ENCODE measurements at regions of chr14 and their contacts with region 1.

Region 1: GRCh38 chr14:90383075-90383730 is 13.6 kb upstream of the CALM1 start:
- DNase-seq: peak; percentile 99
- H3K4me3 ChIP-seq: peak overlapping the region; percentile 60
- H3K4me3 Mint-ChIP-seq: no peak overlapping the region
- H3K27ac Mint-ChIP-seq: no peak overlapping the region
- H3K4me1 ChIP-seq: peaks cover 22% of the 10 kb centered on the region
- H3K4me1 Mint-ChIP-seq: peaks cover 7% of the 10 kb centered on the region
- H3K27me3 ChIP-seq: no peaks in the 10 kb centered on the region
- H3K27me3 Mint-ChIP-seq: no peaks in the 10 kb centered on the region
- CTCF ChIP-seq: peak in 1 of 2 experiments; percentile 9

Region 2: GRCh38 chr14:90288651-90289355 is 94.4 kb before region 1 on chr14:
- CTCF ChIA-PET with region 1: interaction called, 14 read pairs
- POLR2A ChIA-PET with region 1: interaction called, 3 read pairs
- intact Hi-C with region 1: loop called (anchors 5 kb)
- DNase-seq: no peak
- H3K4me3 ChIP-seq: no peak overlapping the region
- H3K4me3 Mint-ChIP-seq: no peak overlapping the region
- H3K27ac Mint-ChIP-seq: no peak overlapping the region
- H3K4me1 ChIP-seq: no peaks in the 10 kb centered on the region
- H3K4me1 Mint-ChIP-seq: no peaks in the 10 kb centered on the region
- H3K27me3 ChIP-seq: no peaks in the 10 kb centered on the region
- H3K27me3 Mint-ChIP-seq: no peaks in the 10 kb centered on the region
- CTCF ChIP-seq: no peak

Region 3: GRCh38 chr14:90308561-90308960 is 74.6 kb before region 1 on chr14:
- CTCF ChIA-PET with region 1: no interaction called
- POLR2A ChIA-PET with region 1: interaction called, 11 read pairs
- intact Hi-C with region 1: no loop called
- DNase-seq: no peak
- H3K4me3 ChIP-seq: no peak overlapping the region
- H3K4me3 Mint-ChIP-seq: no peak overlapping the region
- H3K27ac Mint-ChIP-seq: no peak overlapping the region
- H3K4me1 ChIP-seq: no peaks in the 10 kb centered on the region
- H3K4me1 Mint-ChIP-seq: no peaks in the 10 kb centered on the region
- H3K27me3 ChIP-seq: no peaks in the 10 kb centered on the region
- H3K27me3 Mint-ChIP-seq: no peaks in the 10 kb centered on the region
- CTCF ChIP-seq: no peak

Region 4: DNA sequence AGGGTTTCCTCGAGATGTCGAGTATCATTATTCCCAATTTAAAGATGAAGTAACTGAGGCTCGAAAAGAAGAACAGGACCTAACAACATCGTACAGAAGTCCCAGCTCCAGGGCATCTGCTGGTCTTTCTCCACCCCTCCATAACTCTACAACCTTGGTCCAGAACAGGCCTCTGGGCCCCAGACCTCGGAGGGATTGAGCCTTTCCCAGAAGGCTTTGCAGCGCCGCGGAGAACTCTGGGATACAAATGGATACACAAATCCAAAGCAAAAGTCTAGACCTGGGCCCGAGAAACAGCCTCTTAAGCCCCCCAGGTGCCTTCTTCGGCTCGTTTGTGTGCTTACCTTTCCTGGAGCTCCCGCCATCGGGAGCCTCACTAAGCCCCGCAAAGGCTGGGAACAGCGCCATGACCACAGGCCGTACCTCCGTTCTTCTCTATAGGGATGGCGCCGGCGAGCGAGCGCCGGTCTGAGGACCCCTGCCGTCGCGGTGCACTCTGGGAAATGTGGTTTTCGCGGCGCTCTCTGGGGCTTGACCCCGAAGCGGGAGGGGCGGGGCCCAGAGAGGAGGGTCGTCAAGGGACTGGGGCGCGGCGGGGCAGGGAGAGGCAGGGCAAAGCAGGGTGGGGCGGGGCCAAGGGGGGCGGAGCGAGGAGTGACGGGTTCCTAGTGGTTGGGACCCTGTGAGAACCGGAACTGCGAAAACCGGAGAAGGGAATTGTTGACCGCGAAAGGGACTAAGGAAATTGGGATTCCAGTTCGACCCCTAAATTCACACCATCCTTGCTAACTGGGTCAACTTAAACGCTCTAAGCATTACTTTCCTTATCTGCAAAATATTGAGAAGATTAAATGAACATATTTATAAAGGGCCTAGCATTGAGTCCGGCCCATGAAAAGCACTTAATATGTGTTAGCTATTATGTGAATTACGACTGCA is 51.4 kb before region 1 on chr14 and contains the start of gene NRDE2:
- CTCF ChIA-PET with region 1: interaction called, 4 read pairs
- POLR2A ChIA-PET with region 1: interaction called, 6 read pairs
- intact Hi-C with region 1: loop called (anchors 1 kb)
- DNase-seq: peak; percentile 99
- H3K4me3 ChIP-seq: peak within 1 kb of the TSS; percentile 37
- H3K4me3 Mint-ChIP-seq: peak within 1 kb of the TSS; percentile 91
- H3K27ac Mint-ChIP-seq: peak within 1 kb of the TSS; percentile 95
- H3K4me1 ChIP-seq: peaks cover 18% of the 10 kb centered on the region
- H3K4me1 Mint-ChIP-seq: peaks cover 16% of the 10 kb centered on the region
- H3K27me3 ChIP-seq: no peaks in the 10 kb centered on the region
- H3K27me3 Mint-ChIP-seq: no peaks in the 10 kb centered on the region
- CTCF ChIP-seq: no peak
- total RNA-seq, gene NRDE2: 17.1 and 18.0 TPM in 2 replicates

Region 5: DNA sequence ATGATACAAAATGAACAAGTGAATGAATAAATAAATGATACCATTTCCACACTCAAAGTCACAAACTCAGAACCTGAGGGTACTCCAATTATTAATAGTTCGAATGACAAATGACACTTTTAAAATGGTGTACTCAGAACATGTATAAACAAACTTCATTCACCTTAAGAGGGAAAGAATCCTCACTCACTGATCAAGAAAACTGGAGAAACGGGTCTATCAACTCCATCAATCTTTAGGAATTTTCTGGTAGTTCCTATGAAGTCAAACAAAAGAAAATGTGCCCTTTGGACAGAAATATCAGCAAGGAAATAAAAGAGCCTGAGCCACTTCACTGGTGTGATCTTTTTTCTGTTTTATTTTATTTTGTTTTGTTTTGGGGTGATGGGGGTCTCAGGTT is 46.2 kb before region 1 on chr14:
- CTCF ChIA-PET with region 1: interaction called, 4 read pairs
- POLR2A ChIA-PET with region 1: interaction called, 6 read pairs
- intact Hi-C with region 1: loop called (anchors 1 kb)
- DNase-seq: peak in 1 of 2 experiments; percentile 80
- H3K4me3 ChIP-seq: no peak overlapping the region
- H3K4me3 Mint-ChIP-seq: peak overlapping the region; percentile 62
- H3K27ac Mint-ChIP-seq: peak overlapping the region; percentile 87
- H3K4me1 ChIP-seq: peaks cover 31% of the 10 kb centered on the region
- H3K4me1 Mint-ChIP-seq: peaks cover 22% of the 10 kb centered on the region
- H3K27me3 ChIP-seq: no peaks in the 10 kb centered on the region
- H3K27me3 Mint-ChIP-seq: no peaks in the 10 kb centered on the region
- CTCF ChIP-seq: no peak

Region 6: DNA sequence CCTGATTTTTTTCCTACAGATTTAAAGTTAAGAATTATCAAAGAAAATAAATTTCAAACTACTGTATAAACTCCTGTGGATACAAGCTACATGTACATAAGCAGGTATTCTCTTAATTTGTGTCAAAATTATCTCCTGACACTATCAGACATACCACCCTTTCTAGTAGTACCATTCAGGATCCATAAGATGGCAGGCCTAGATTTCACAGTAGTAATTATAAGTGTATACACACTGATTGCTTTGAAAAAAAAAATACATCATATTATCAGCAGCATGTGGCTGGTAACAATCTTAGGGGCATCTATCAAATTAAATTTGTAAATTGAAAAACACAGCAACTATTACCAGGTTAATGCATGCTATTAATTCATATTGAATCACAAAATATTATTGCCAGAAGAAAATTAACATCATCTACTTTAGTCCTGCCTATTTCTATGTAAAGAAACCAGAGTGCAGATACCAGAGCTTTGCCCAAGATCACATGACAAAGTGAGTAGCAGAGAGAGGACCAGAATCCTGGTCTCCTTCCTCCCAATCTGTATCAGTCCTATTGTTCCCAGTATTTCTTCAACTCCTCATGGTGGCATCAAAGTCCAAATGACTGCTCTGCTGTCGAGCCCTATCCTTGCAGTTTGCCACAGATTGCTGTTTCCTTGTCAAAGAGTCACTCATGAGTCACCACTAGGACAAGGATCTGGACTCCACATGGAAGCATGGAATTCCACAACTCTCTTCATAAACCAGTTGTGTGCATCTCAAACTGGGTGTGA is 14.1 kb before region 1 on chr14:
- CTCF ChIA-PET with region 1: interaction called, 7 read pairs
- POLR2A ChIA-PET with region 1: interaction called, 10 read pairs
- intact Hi-C with region 1: loop called (anchors 1 kb)
- DNase-seq: peak; percentile 39 to 62
- H3K4me3 ChIP-seq: no peak overlapping the region
- H3K4me3 Mint-ChIP-seq: no peak overlapping the region
- H3K27ac Mint-ChIP-seq: no peak overlapping the region
- H3K4me1 ChIP-seq: peaks cover 23% of the 10 kb centered on the region
- H3K4me1 Mint-ChIP-seq: peaks cover 13% of the 10 kb centered on the region
- H3K27me3 ChIP-seq: no peaks in the 10 kb centered on the region
- H3K27me3 Mint-ChIP-seq: no peaks in the 10 kb centered on the region
- CTCF ChIP-seq: no peak

Region 7: GRCh38 chr14:90440021-90440451 is 56.8 kb after region 1 on chr14:
- CTCF ChIA-PET with region 1: no interaction called
- POLR2A ChIA-PET with region 1: no interaction called
- intact Hi-C with region 1: no loop called
- DNase-seq: no peak
- H3K4me3 ChIP-seq: no peak overlapping the region
- H3K4me3 Mint-ChIP-seq: no peak overlapping the region
- H3K27ac Mint-ChIP-seq: no peak overlapping the region
- H3K4me1 ChIP-seq: peaks cover 15% of the 10 kb centered on the region
- H3K4me1 Mint-ChIP-seq: peaks cover 13% of the 10 kb centered on the region
- H3K27me3 ChIP-seq: no peaks in the 10 kb centered on the region
- H3K27me3 Mint-ChIP-seq: no peaks in the 10 kb centered on the region
- CTCF ChIP-seq: no peak

Region 8: GRCh38 chr14:90461425-90461824 is 78.2 kb after region 1 on chr14:
- CTCF ChIA-PET with region 1: no interaction called
- POLR2A ChIA-PET with region 1: no interaction called
- intact Hi-C with region 1: no loop called
- DNase-seq: no peak
- H3K4me3 ChIP-seq: no peak overlapping the region
- H3K4me3 Mint-ChIP-seq: no peak overlapping the region
- H3K27ac Mint-ChIP-seq: no peak overlapping the region
- H3K4me1 ChIP-seq: no peaks in the 10 kb centered on the region
- H3K4me1 Mint-ChIP-seq: peaks cover 6% of the 10 kb centered on the region
- H3K27me3 ChIP-seq: no peaks in the 10 kb centered on the region
- H3K27me3 Mint-ChIP-seq: no peaks in the 10 kb centered on the region
- CTCF ChIP-seq: no peak

Measured in Caco-2 (cell line).